T-cell (primary cell): ENCODE measurements at regions of chr12 and their contacts with region 1.

Region 1: GRCh38 chr12:80643961-80644360 is 63.5 kb upstream of the MYF6 start:
- DNase-seq: no peak
- ATAC-seq: no peak
- H3K4me3 ChIP-seq: no peak overlapping the region
- H3K4me3 Mint-ChIP-seq: no peak overlapping the region
- H3K27ac ChIP-seq: no peak overlapping the region
- H3K27ac Mint-ChIP-seq: no peak overlapping the region
- H3K4me1 ChIP-seq: no peaks in the 10 kb centered on the region
- H3K4me1 Mint-ChIP-seq: no peaks in the 10 kb centered on the region
- H3K27me3 ChIP-seq: no peaks in the 10 kb centered on the region
- H3K27me3 Mint-ChIP-seq: no peaks in the 10 kb centered on the region

Region 2: GRCh38 chr12:81440001-81440400 is 796.0 kb after region 1 on chr12:
- CTCF ChIA-PET with region 1: no interaction called
- POLR2A ChIA-PET with region 1: interaction called in 1 of 2 experiments, 13 read pairs
- DNase-seq: no peak
- ATAC-seq: no peak
- H3K4me3 ChIP-seq: no peak overlapping the region
- H3K4me3 Mint-ChIP-seq: no peak overlapping the region
- H3K27ac ChIP-seq: no peak overlapping the region
- H3K27ac Mint-ChIP-seq: no peak overlapping the region
- H3K4me1 ChIP-seq: no peaks in the 10 kb centered on the region
- H3K4me1 Mint-ChIP-seq: no peaks in the 10 kb centered on the region
- H3K27me3 ChIP-seq: no peaks in the 10 kb centered on the region
- H3K27me3 Mint-ChIP-seq: no peaks in the 10 kb centered on the region